HCT116 (cell line): ENCODE measurements at regions of chr15 and their contacts with region 1.

Region 1: GRCh38 chr15:82849556-82850512 is 40.4 kb downstream of the WHAMM start:
- DNase-seq: peak; percentile 84
- ATAC-seq: peak; percentile 98
- H3K4me3 ChIP-seq: peak overlapping the region in 1 of 2 experiments; percentile 22; a peak in 1 of 4 replicates
- H3K27ac ChIP-seq: peak overlapping the region; percentile 7; the same call in 1 of the 2 replicates
- H3K4me1 ChIP-seq: peaks cover 3 to 19% of the 10 kb centered on the region in 2 experiments; a peak in 3 of 4 replicates
- H3K27me3 ChIP-seq: no peaks in the 10 kb centered on the region
- CTCF ChIP-seq: peak; percentile 66 to 89 (median 88)
- POLR2A ChIP-seq: no peak
- RAD21 ChIP-seq: peak; percentile 87

Region 2: DNA sequence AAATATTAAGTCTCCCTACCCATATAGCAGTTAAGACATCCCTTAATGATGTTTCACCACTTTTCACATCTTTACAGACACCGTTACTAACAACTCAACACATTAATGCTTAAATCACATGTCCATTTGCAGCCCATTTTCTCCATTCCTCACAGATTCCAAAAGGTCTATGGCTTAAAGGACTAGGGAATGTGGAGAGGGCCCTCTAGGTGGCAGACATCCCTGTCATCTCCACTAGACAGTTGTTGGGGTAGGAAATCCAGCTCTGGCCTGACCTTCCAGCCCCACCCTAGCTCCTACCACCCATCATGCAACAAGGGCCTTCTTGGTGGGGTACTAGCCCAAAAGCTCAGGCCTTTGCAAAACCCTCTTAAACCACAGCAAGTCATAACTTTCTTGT is 227.9 kb before region 1 on chr15:
- CTCF ChIA-PET with region 1: no interaction called
- POLR2A ChIA-PET with region 1: no interaction called
- RAD21 ChIA-PET with region 1: no interaction called
- intact Hi-C with region 1: no loop called
- DNase-seq: no peak
- ATAC-seq: peak; percentile 84
- H3K4me3 ChIP-seq: no peak overlapping the region
- H3K27ac ChIP-seq: no peak overlapping the region
- H3K4me1 ChIP-seq: no peaks in the 10 kb centered on the region
- H3K27me3 ChIP-seq: peaks cover 4% of the 10 kb centered on the region; the same call in 1 of the 2 replicates
- CTCF ChIP-seq: peak in 2 of 3 experiments; percentile 39 to 43; a peak in 3 of 6 replicates
- POLR2A ChIP-seq: no peak
- RAD21 ChIP-seq: peak; percentile 24; the same call in 1 of the 2 replicates

Region 3: DNA sequence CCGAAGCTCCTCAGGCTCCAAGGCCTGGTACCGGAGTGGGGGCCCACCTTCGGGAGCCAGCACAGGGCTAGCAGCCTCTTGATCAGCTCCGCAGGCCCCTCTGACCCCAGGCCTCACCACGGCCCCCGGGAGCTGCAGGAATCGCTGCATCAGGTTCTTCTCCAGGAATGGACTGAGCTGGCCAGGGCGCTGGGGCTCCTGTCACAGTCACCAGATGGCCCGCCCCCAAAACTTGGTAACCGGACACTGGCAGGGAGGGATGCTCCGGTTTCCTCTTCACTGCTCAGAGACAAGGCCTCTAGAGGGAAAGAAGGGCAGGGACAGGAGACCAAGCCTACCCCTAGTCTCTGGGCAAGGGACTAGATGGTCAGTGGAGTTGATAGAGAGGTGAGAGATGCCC is 150.1 kb before region 1 on chr15:
- CTCF ChIA-PET with region 1: no interaction called
- POLR2A ChIA-PET with region 1: no interaction called
- RAD21 ChIA-PET with region 1: no interaction called
- intact Hi-C with region 1: no loop called
- DNase-seq: no peak
- ATAC-seq: peak; percentile 81
- H3K4me3 ChIP-seq: no peak overlapping the region
- H3K27ac ChIP-seq: no peak overlapping the region
- H3K4me1 ChIP-seq: peaks cover 0 to 6% of the 10 kb centered on the region in 2 experiments; a peak in 2 of 4 replicates
- H3K27me3 ChIP-seq: peaks cover 3% of the 10 kb centered on the region; the same call in 1 of the 2 replicates
- CTCF ChIP-seq: no peak
- POLR2A ChIP-seq: no peak
- RAD21 ChIP-seq: no peak

Region 4: GRCh38 chr15:82985688-82986441 is 136.0 kb after region 1 on chr15 and contains the start of gene RAMAC:
- CTCF ChIA-PET with region 1: interaction called, 7 read pairs
- POLR2A ChIA-PET with region 1: no interaction called
- RAD21 ChIA-PET with region 1: no interaction called
- intact Hi-C with region 1: loop called (anchors 5 kb)
- DNase-seq: peak; percentile 92
- ATAC-seq: peak; percentile 96
- H3K4me3 ChIP-seq: peak within 1 kb of the TSS; percentile 87 to 99
- H3K27ac ChIP-seq: peak within 1 kb of the TSS; percentile 65
- H3K4me1 ChIP-seq: peaks cover 7 to 17% of the 10 kb centered on the region in 2 experiments
- H3K27me3 ChIP-seq: no peaks in the 10 kb centered on the region
- CTCF ChIP-seq: no peak
- POLR2A ChIP-seq: no peak
- RAD21 ChIP-seq: no peak
- total RNA-seq, gene RAMAC: 16.5 TPM

Region 5: DNA sequence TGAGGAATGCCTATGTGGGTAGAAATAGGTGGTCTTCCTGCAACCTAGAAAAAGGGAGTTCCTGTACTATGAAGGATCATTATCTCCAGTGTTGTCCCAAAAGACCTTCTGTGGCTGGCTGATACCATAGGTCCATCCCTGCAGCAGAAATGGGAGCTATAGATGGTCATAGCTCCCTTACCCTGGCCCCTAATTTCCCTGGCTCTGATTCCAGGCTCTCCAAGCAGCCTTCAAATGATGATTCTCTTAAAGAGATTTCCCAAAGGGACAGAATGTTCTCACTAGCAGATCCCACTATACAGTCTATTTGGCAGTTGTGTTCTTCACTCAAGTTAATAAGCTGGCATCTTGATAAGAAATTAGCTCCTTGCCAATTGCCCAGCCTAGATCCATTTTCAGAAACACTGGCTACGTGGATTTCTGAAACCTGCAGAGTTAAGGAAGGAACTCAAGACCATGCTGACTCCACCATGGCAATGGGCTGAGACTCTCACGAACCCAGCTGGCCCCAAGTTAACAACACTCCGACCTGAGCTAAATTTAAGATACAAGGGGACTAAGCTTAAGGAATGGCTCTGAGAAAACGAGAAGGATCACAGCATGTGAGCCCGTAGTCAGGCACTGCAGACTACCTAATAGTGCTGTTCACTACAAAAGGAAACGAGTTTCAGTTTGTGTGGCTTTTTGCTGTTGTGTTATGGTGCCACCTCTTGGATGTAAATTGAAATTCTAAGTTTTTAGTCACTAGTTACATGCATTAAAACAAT is 150.3 kb after region 1 on chr15:
- CTCF ChIA-PET with region 1: interaction called, 10 read pairs
- POLR2A ChIA-PET with region 1: no interaction called
- RAD21 ChIA-PET with region 1: no interaction called
- intact Hi-C with region 1: loop called (anchors 2 kb)
- DNase-seq: no peak
- ATAC-seq: peak; percentile 79
- H3K4me3 ChIP-seq: no peak overlapping the region
- H3K27ac ChIP-seq: no peak overlapping the region
- H3K4me1 ChIP-seq: peaks cover 0 to 3% of the 10 kb centered on the region in 2 experiments; a peak in 1 of 4 replicates
- H3K27me3 ChIP-seq: no peaks in the 10 kb centered on the region
- CTCF ChIP-seq: peak; percentile 39 to 78 (median 64); a peak in 5 of 6 replicates
- POLR2A ChIP-seq: no peak
- RAD21 ChIP-seq: peak; percentile 87

Region 6: DNA sequence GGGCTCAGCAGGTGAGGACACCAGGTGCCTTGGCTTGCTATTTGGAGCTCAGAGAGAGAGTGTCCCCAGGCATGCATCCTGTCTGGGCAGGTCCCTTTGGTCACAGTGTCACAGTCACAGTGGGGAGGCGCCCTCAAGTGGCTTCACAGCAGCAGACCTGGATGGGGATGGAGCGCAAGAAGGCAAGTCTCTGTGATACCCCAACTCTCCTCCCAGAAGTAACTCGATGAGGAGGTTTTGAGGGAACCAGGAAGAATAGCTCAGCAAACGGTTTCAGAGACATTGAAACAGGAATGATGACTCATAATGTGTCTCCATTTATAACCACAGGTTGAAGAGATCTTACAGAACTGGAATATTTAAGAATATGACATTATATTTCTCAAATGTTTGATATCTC is 530.8 kb after region 1 on chr15:
- CTCF ChIA-PET with region 1: no interaction called
- POLR2A ChIA-PET with region 1: no interaction called
- RAD21 ChIA-PET with region 1: no interaction called
- intact Hi-C with region 1: loop called (anchors 2 kb)
- DNase-seq: peak; percentile 69
- ATAC-seq: peak; percentile 78
- H3K4me3 ChIP-seq: peak overlapping the region in 1 of 2 experiments; percentile 61; a peak in 2 of 4 replicates
- H3K27ac ChIP-seq: peak overlapping the region; percentile 51
- H3K4me1 ChIP-seq: peaks cover 18 to 39% of the 10 kb centered on the region in 2 experiments
- H3K27me3 ChIP-seq: no peaks in the 10 kb centered on the region
- CTCF ChIP-seq: peak; percentile 65 to 77 (median 73); a peak in 5 of 6 replicates
- POLR2A ChIP-seq: no peak
- RAD21 ChIP-seq: peak; percentile 93